Activated B cell treated with CpG ODN at 0.5 μM for 24 hours (primary cell): ENCODE measurements at regions of chr11 and their contacts with region 1.

Region 1: DNA sequence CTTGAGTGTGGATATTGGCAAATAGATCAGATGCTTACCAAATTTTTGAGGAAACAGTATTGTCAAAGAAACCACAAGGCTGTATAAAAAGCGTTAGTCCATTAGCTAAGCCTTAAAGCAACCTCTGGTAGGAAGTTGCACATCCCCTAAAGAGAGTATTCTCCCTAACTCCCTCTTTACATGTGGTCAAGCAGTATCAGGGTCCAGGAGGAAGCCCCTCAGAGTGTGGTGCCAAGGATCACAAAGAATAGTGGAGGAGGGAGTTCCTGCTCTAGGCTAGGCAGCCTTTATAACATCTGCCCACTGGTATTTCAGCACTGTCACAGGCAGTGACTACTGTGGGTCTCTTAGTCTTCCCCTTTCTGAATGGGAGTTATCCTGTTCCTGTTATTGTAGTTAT is 18.8 kb upstream of the AMPD3 start:
- DNase-seq: no peak
- ATAC-seq: no peak
- H3K4me3 Mint-ChIP-seq: no peak overlapping the region
- H3K27ac Mint-ChIP-seq: peak overlapping the region; percentile 68
- H3K4me1 Mint-ChIP-seq: peaks cover 23% of the 10 kb centered on the region
- H3K27me3 Mint-ChIP-seq: no peaks in the 10 kb centered on the region
- CTCF ChIP-seq: no peak

Region 2: DNA sequence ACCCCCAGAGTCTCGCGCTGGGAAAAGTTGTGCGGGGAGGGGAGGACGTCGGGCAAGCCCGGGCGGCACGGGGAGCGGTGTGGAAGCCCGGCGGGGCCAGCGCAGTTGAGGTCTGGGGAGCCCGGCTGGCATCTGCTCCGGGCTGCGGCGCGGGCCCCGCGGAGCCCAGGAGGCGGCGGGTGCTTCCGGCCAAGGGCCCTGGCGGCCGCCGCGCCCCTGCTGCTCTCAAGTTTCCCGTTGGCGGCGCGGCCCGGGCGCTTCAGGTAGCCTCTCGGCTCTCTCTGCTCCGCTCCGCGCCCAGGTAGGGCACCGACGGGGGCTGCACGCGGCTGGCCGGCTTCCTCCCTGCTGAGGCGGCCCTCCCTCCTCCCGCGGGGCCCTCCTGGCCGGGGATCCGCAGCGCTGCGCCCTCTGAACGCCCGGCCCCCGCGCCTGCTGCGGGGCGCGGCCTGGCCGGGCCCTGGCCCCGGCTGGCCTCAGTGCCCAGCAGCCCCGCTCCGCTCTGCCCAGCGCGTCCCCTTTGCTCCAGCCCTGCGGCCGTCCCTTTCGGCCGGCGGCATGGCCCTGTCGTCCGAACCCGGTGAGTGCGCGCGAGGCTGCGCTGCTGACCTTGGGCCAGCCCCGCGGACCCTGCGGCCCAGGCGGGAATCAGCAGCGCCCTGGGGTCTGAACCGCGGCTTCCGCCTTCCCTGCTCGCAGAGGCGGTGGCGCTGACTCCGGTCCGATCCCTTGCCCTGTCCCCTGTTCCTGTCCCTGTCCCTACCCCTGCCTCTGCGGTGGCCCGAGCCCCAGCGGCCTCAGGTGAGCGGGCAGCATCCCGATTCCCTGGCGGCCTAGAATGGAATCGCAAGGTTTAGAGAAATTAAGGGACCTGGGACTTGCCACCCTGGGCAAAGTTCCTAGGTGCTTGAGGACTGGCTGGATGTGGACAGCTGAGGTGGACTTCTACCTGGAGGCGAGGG is 14.5 kb after region 1 on chr11:
- CTCF ChIA-PET with region 1: no interaction called
- POLR2A ChIA-PET with region 1: interaction called, 159 read pairs
- intact Hi-C with region 1: loop called (anchors 2 kb)
- DNase-seq: peak; percentile 64
- ATAC-seq: peak; percentile 40
- H3K4me3 Mint-ChIP-seq: peak overlapping the region; percentile 90
- H3K27ac Mint-ChIP-seq: peak overlapping the region; percentile 94
- H3K4me1 Mint-ChIP-seq: peaks cover 60% of the 10 kb centered on the region
- H3K27me3 Mint-ChIP-seq: no peaks in the 10 kb centered on the region
- CTCF ChIP-seq: no peak

Region 3: GRCh38 chr11:10581481-10582019 is 145.3 kb after region 1 on chr11:
- CTCF ChIA-PET with region 1: no interaction called
- POLR2A ChIA-PET with region 1: no interaction called
- intact Hi-C with region 1: no loop called
- DNase-seq: no peak
- ATAC-seq: peak; percentile 66
- H3K4me3 Mint-ChIP-seq: no peak overlapping the region
- H3K27ac Mint-ChIP-seq: peak overlapping the region; percentile 80
- H3K4me1 Mint-ChIP-seq: peaks cover 72% of the 10 kb centered on the region
- H3K27me3 Mint-ChIP-seq: no peaks in the 10 kb centered on the region
- CTCF ChIP-seq: no peak